ENCODE measurements at regions of chr4 and their contacts with region 1.

Region 1: GRCh38 chr4:36029951-36030350 is 214.4 kb downstream of the ARAP2 start:
- DNase-seq: no peak
- ATAC-seq: no peak
- H3K4me3 Mint-ChIP-seq: no peak overlapping the region
- H3K27ac Mint-ChIP-seq: no peak overlapping the region
- H3K4me1 Mint-ChIP-seq: peaks cover under 1% of the 10 kb centered on the region
- H3K27me3 Mint-ChIP-seq: no peaks in the 10 kb centered on the region

Region 2: DNA sequence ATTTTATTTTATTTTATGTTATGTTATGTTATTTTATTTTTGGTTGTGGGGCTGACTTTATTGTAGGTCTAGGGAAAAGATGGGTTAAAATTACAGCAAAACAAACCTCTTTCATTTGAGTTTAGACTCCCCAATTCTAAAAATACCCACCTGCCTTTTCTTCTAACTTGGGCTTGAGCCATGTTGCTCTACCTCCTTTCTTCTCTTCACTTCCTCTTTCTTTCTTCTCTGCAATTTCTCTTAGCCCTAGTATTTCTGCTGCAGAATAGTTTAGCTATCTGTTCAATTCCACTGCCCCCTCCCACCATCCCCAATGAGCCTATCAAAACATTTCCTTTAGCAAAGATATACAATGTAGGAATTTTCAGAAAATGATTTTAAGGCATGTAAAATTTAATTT is 438.9 kb before region 1 on chr4:
- CTCF ChIA-PET with region 1: no interaction called
- POLR2A ChIA-PET with region 1: interaction called, 13 read pairs
- intact Hi-C with region 1: no loop called
- DNase-seq: no peak
- ATAC-seq: no peak
- H3K4me3 Mint-ChIP-seq: no peak overlapping the region
- H3K27ac Mint-ChIP-seq: no peak overlapping the region
- H3K4me1 Mint-ChIP-seq: no peaks in the 10 kb centered on the region
- H3K27me3 Mint-ChIP-seq: no peaks in the 10 kb centered on the region

Region 3: GRCh38 chr4:35900286-35901243 is 129.4 kb before region 1 on chr4:
- CTCF ChIA-PET with region 1: no interaction called
- POLR2A ChIA-PET with region 1: no interaction called
- intact Hi-C with region 1: no loop called
- DNase-seq: no peak
- ATAC-seq: no peak
- H3K4me3 Mint-ChIP-seq: no peak overlapping the region
- H3K27ac Mint-ChIP-seq: no peak overlapping the region
- H3K4me1 Mint-ChIP-seq: no peaks in the 10 kb centered on the region
- H3K27me3 Mint-ChIP-seq: peaks cover 5% of the 10 kb centered on the region

Region 4: GRCh38 chr4:35970366-35970960 is 59.5 kb before region 1 on chr4:
- CTCF ChIA-PET with region 1: no interaction called
- POLR2A ChIA-PET with region 1: no interaction called
- intact Hi-C with region 1: no loop called
- DNase-seq: peak; percentile 42
- ATAC-seq: peak; percentile 81
- H3K4me3 Mint-ChIP-seq: no peak overlapping the region
- H3K27ac Mint-ChIP-seq: no peak overlapping the region
- H3K4me1 Mint-ChIP-seq: peaks cover 10% of the 10 kb centered on the region
- H3K27me3 Mint-ChIP-seq: peaks cover 6% of the 10 kb centered on the region